Head of caudate nucleus (tissue), 42 donors: ENCODE measurements at regions of chr1 and their contacts with region 1.

Region 1: DNA sequence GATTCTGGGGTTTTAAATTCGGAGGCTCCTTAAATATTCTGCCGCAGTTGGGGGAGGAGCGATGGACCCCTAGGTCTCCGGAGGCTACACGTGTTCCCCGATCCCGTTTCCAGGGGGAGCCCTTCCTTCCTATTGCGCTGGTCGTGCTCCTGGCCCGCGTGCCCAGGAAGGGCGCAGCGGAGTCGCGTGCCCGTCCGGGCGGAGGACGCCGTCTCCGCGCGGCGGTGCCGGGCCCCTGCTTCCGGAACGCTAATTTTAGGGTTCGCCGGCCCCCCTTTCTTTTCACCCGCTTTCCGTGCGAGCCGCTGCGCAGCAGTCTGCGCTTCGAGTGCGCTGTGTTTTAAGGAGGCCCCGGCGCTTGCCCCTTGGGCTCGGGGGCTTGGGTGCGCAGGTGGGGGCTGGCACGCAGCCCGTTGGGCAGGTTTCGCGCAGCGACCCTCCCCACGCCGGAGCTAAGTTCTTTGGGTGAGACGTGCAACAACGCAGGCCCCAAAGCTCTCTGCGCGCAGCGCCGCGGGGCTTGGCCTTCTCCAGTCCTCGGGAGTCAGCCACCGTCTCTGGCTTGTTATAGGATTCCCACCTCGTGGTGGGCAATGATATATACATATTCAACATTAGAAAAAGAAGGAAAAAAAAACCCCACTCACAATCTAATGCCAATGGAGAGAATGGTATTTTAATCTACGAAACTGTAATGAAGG is 43.5 kb upstream of the DNAJC6 start:
- DNase-seq: peak; percentile 53 to 90 (median 76)

Region 2: DNA sequence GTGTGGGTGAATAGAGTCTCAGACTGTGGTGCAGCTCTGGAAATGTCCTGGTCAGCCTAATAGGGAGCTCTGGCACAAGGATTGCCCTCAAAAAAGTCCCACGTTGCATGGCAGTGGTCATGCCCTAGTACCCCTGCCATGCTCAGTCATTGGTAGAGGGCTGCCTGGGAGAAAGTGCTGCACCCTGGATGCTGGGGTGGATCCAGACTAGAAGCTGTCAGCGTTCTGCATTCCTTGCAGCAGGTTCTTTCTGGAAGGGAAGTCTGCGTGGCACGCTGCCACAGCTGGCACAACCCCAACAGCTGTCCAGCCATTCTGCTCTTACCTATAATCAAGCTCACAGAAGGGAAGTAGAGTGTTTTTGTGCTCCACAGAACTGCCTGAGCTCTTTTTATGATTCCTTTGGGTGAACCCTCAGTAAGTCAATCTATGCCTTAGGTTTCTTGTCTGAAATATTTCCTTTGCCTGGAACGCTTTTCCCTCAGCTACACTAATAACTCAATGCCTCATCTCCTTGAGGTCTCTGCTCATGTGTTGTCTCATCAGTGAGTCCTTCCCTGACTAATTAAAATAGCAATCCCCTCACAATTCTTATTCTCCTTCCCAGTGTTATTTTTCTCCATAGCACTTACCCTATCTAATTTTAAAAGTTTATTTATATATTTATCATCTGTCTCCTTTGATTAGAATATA is 238.0 kb before region 1 on chr1:
- intact Hi-C with region 1: no loop called
- DNase-seq: peak in 15 of 42 donors; percentile 9 to 48 (median 25)

Region 3: GRCh38 chr1:65289449-65289848 is 23.6 kb after region 1 on chr1:
- intact Hi-C with region 1: no loop called
- DNase-seq: no peak

Region 4: GRCh38 chr1:65332821-65333220 is 67.0 kb after region 1 on chr1:
- intact Hi-C with region 1: loop called (anchors 2 kb)
- DNase-seq: peak in 25 of 42 donors; percentile 16 to 76 (median 47)

Region 5: DNA sequence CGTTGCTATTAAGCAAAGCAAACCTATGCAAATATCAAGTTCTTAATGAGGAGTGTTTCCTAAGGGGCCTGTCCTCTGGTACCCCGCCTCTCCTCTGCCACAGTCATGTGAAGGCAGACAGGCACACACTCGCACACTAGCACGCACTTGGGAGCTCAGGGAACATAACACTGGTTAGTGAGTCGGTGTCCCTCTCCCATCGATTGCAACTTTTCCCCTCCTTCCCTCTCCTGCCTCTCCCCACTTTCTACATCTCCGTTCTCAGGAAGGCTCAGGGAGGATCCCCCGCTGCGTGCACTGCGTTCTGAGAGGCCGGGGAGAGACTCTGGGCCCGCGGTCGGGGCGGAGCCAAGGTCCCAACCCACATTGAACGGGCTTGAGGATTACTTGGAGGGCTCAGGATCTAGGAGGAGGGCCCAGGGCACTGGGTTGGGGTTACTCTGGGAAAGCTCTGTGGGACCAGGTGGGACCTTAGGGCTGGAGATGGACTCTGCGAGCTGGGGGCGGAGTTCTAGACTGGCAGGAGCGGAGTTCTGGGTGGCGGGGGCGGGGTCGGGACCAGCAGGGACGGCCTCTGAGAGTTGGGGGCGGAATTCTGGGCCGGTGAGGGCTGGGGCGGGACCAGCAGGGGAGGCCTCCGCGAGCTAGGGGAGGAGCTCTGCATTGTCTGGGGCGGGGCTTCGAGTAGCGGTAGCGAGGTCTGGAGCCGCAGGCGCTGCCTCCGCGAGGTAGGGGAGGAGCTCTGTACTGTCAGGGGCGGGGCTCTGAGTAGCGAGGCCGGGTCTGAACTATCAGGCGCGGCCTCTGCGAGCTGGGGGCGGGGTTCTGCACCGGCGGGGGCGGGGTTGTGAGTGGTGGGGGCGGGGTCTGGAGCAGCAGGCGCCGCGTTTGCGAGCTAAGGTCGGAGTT is 154.1 kb after region 1 on chr1:
- intact Hi-C with region 1: loop called (anchors 5 kb)
- DNase-seq: peak; percentile 90 to 99 (median 97)